ENCODE measurements at regions of chr16 and their contacts with region 1.

Region 1: GRCh38 chr16:77722309-77723107 is at the start of gene NUDT7:
- DNase-seq: peak; percentile 96
- H3K4me3 ChIP-seq: peak within 1 kb of the TSS; percentile 82
- H3K27ac ChIP-seq: peak within 1 kb of the TSS; percentile 44
- H3K4me1 ChIP-seq: peaks cover 17% of the 10 kb centered on the region
- CTCF ChIP-seq: peak; percentile 67
- total RNA-seq, gene NUDT7: 4.4 and 9.1 TPM in 2 replicates

Region 2: GRCh38 chr16:77788181-77789084 is 65.9 kb after region 1 on chr16 and contains the start of gene VAT1L:
- CTCF ChIA-PET with region 1: no interaction called
- POLR2A ChIA-PET with region 1: no interaction called
- intact Hi-C with region 1: no loop called
- DNase-seq: no peak
- H3K4me3 ChIP-seq: no peak within 1 kb of the TSS
- H3K27ac ChIP-seq: no peak within 1 kb of the TSS
- H3K4me1 ChIP-seq: no peaks in the 10 kb centered on the region
- CTCF ChIP-seq: no peak
- total RNA-seq, gene VAT1L: not detected in 2 replicates

Region 3: GRCh38 chr16:78099372-78100161 is 377.1 kb after region 1 on chr16 and contains the start of gene WWOX:
- CTCF ChIA-PET with region 1: no interaction called
- POLR2A ChIA-PET with region 1: interaction called, 4 read pairs
- intact Hi-C with region 1: loop called (anchors 1 kb)
- DNase-seq: peak; percentile 98
- H3K4me3 ChIP-seq: peak within 1 kb of the TSS; percentile 87
- H3K27ac ChIP-seq: peak within 1 kb of the TSS; percentile 68
- H3K4me1 ChIP-seq: peaks cover 11% of the 10 kb centered on the region
- CTCF ChIP-seq: peak; percentile 90
- total RNA-seq, gene WWOX: 47.6 and 70.2 TPM in 2 replicates

Region 4: GRCh38 chr16:79001156-79001967 is 1278.9 kb after region 1 on chr16:
- CTCF ChIA-PET with region 1: no interaction called
- POLR2A ChIA-PET with region 1: interaction called, 11 read pairs
- intact Hi-C with region 1: no loop called
- DNase-seq: no peak
- H3K4me3 ChIP-seq: no peak overlapping the region
- H3K27ac ChIP-seq: no peak overlapping the region
- H3K4me1 ChIP-seq: no peaks in the 10 kb centered on the region
- CTCF ChIP-seq: no peak

Measured in OCI-LY7 (cell line).